ENCODE measurements at regions of chr6 and their contacts with region 1.

Region 1: DNA sequence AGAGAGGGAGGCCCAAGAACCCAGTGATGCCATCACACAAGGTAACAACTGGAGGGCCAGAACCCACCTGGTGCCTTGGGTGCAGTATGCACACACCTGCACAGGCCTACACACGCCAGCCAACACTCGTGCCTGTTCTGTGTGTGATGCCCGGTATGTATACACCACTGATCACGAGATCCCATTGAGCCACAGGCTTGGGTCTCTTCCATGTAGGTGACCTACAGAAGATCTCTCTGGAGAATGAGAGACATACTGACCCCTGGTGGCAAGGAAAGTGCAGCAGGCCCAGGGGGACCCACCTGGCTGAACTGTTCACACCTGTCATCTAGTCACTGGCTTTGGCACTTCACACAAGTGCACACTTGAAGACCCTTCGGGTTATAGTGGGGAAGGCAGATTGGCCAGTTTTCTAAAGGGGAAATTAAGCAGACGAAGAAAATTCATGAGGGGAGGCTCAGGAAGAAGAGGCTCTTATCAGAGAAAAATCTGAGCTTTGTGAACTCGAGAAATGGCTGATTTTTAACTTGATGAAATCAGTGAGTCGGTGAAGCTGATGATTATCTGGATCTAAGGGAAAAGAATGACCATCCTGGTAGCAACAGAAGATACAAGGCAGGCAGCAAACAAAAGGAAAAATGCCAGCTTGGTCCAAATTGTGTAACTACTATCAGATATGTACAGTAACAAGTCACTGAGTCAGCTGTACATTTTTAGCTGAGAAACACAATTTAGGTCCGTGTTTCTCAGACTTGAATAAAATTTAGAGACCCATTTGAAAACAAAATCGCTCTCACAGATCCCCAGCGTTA is 69.1 kb upstream of the PBOV1 start:
- DNase-seq: peak; percentile 50
- ATAC-seq: peak; percentile 84 to 88
- H3K4me3 ChIP-seq: no peak overlapping the region
- H3K27ac ChIP-seq: no peak overlapping the region
- H3K4me1 ChIP-seq: no peaks in the 10 kb centered on the region
- H3K27me3 ChIP-seq: no peaks in the 10 kb centered on the region
- CTCF ChIP-seq: peak; percentile 72

Region 2: DNA sequence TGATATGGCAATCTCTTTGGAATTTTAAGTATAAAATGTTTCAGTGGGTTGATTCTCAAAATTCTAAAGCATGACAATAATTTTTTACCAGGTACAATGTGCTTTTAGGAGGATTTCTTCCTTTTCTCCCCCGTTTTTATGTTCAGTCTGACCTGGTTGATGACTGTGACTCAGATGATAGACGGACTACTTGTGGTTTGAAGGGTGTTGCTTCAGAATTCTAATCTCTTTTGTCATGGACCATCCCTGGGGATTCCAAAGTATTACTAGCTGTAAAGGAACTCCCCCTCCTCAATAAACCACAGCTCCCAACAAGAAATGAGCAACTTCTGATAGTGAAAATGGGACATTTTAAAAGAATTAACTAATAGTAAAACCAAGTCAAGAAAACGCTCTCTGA is 455.2 kb before region 1 on chr6:
- intact Hi-C with region 1: no loop called
- DNase-seq: no peak
- ATAC-seq: no peak
- H3K4me3 ChIP-seq: no peak overlapping the region
- H3K27ac ChIP-seq: no peak overlapping the region
- H3K4me1 ChIP-seq: no peaks in the 10 kb centered on the region
- H3K27me3 ChIP-seq: no peaks in the 10 kb centered on the region
- CTCF ChIP-seq: no peak

Region 3: GRCh38 chr6:138115877-138116660 is 171.3 kb before region 1 on chr6:
- intact Hi-C with region 1: loop called (anchors 10 kb)
- DNase-seq: peak; percentile 60
- ATAC-seq: peak; percentile 88 to 92
- H3K4me3 ChIP-seq: no peak overlapping the region
- H3K27ac ChIP-seq: no peak overlapping the region
- H3K4me1 ChIP-seq: no peaks in the 10 kb centered on the region
- H3K27me3 ChIP-seq: no peaks in the 10 kb centered on the region
- CTCF ChIP-seq: peak; percentile 68

Region 4: GRCh38 chr6:138188278-138188941 is 98.9 kb before region 1 on chr6:
- intact Hi-C with region 1: no loop called
- DNase-seq: no peak
- ATAC-seq: no peak
- H3K4me3 ChIP-seq: no peak overlapping the region
- H3K27ac ChIP-seq: no peak overlapping the region
- H3K4me1 ChIP-seq: peaks cover 13% of the 10 kb centered on the region
- H3K27me3 ChIP-seq: no peaks in the 10 kb centered on the region
- CTCF ChIP-seq: no peak

Measured in lower lobe of right lung (tissue), 2 donors.